ENCODE measurements at regions of chr1 and their contacts with region 1.

Region 1: DNA sequence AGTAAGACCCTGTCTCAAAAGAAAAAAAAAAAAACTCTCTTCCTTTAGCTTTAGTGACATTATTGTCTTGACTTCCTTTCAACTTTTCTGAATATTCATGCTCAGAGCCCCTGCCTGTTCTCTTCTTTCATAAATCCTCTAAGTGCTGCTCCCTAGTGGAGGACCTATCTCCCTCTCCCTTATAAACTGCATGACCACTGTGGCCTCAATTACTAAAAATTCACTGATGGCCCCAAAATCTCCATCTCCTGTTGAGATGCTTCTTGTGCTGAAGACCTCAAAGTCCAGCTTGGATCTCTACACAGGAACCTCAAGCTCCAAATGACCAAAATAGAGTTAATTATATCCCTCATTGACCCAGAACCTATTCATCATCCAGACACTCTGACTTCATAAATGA is 7.8 kb downstream of the ITLN1 start:
- DNase-seq: peak in 7 of 9 donors; percentile 32 to 72 (median 50)
- ATAC-seq: peak; percentile 83
- H3K4me3 ChIP-seq: no peak overlapping the region
- H3K4me3 Mint-ChIP-seq: peak overlapping the region in 2 of 10 donors; percentile 1 to 4
- H3K27ac ChIP-seq: no peak overlapping the region
- H3K27ac Mint-ChIP-seq: peak overlapping the region in 4 of 9 donors; percentile 5 to 15 (median 10)
- H3K4me1 ChIP-seq: peaks cover 8 to 10% of the 10 kb centered on the region in 2 donors
- H3K4me1 Mint-ChIP-seq: peaks cover 15 to 28% (median 23%) of the 10 kb centered on the region in 7 donors
- H3K27me3 ChIP-seq: no peaks in the 10 kb centered on the region
- H3K27me3 Mint-ChIP-seq: peaks cover 0 to 11% (median 0%) of the 10 kb centered on the region in 5 donors

Region 2: GRCh38 chr1:160726498-160727315 is 150.5 kb before region 1 on chr1:
- CTCF ChIA-PET with region 1: interaction called, 9 read pairs
- POLR2A ChIA-PET with region 1: interaction called, 3 read pairs
- intact Hi-C with region 1: loop called (anchors 1 to 5 kb)
- DNase-seq: peak in 8 of 9 donors; percentile 57 to 80 (median 73)
- ATAC-seq: peak; percentile 97
- H3K4me3 ChIP-seq: no peak overlapping the region
- H3K4me3 Mint-ChIP-seq: no peak overlapping the region
- H3K27ac ChIP-seq: no peak overlapping the region
- H3K27ac Mint-ChIP-seq: no peak overlapping the region
- H3K4me1 ChIP-seq: peaks cover 15 to 21% of the 10 kb centered on the region in 2 donors
- H3K4me1 Mint-ChIP-seq: peaks cover 12 to 29% (median 16%) of the 10 kb centered on the region in 7 donors
- H3K27me3 ChIP-seq: no peaks in the 10 kb centered on the region
- H3K27me3 Mint-ChIP-seq: no peaks in the 10 kb centered on the region

Region 3: GRCh38 chr1:160855181-160855981 is 21.8 kb before region 1 on chr1:
- CTCF ChIA-PET with region 1: interaction called, 4 read pairs
- POLR2A ChIA-PET with region 1: no interaction called
- intact Hi-C with region 1: loop called in 1 of 2 experiments (anchors 2 kb)
- DNase-seq: no peak
- ATAC-seq: peak; percentile 51
- H3K4me3 ChIP-seq: peak overlapping the region; percentile 4
- H3K4me3 Mint-ChIP-seq: no peak overlapping the region
- H3K27ac ChIP-seq: no peak overlapping the region
- H3K27ac Mint-ChIP-seq: no peak overlapping the region
- H3K4me1 ChIP-seq: peaks cover 12 to 28% of the 10 kb centered on the region in 2 donors
- H3K4me1 Mint-ChIP-seq: peaks cover 0 to 17% (median 10%) of the 10 kb centered on the region in 7 donors
- H3K27me3 ChIP-seq: no peaks in the 10 kb centered on the region
- H3K27me3 Mint-ChIP-seq: peaks cover 0 to 5% (median 0%) of the 10 kb centered on the region in 5 donors

Region 4: GRCh38 chr1:160911441-160911840 is 34.2 kb after region 1 on chr1:
- CTCF ChIA-PET with region 1: no interaction called
- POLR2A ChIA-PET with region 1: no interaction called
- intact Hi-C with region 1: no loop called
- DNase-seq: no peak
- ATAC-seq: no peak
- H3K4me3 ChIP-seq: no peak overlapping the region
- H3K4me3 Mint-ChIP-seq: no peak overlapping the region
- H3K27ac ChIP-seq: no peak overlapping the region
- H3K27ac Mint-ChIP-seq: no peak overlapping the region
- H3K4me1 ChIP-seq: no peaks in the 10 kb centered on the region
- H3K4me1 Mint-ChIP-seq: no peaks in the 10 kb centered on the region
- H3K27me3 ChIP-seq: no peaks in the 10 kb centered on the region
- H3K27me3 Mint-ChIP-seq: peaks cover 0 to 15% (median 0%) of the 10 kb centered on the region in 5 donors

Measured in naive thymus-derived CD4-positive, alpha-beta T cell (primary cell).